Left cardiac atrium (tissue), 4 donors: ENCODE measurements at regions of chr2 and their contacts with region 1.

Region 1: DNA sequence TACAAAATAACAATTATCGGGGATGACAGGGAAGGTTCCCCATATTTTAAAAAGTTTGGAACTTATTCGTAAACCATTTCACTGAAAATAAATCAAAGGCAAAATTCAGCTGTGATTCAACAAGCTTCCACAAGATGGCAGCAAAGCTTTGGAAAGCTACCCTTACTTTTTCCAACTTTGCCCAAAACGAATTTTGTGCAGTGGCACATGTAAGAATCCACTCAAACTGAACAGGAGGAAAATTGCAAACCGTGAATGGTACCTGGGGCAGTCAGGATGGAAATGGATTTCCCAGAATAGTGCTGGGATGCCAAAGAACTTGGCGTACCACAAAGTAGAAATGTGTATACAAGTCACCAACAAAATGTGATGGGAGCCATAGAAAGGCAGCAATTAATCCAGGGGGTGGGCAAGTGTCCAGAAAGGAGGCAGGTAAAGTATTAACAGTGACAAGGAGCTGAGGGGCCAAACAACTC is 10.7 kb downstream of the RPL31 start:
- DNase-seq: no peak
- ATAC-seq: peak; percentile 9 to 38

Region 2: GRCh38 chr2:100941646-100942240 is 71.0 kb before region 1 on chr2:
- intact Hi-C with region 1: no loop called
- DNase-seq: no peak
- ATAC-seq: no peak

Region 3: GRCh38 chr2:101205521-101205998 is 192.8 kb after region 1 on chr2:
- intact Hi-C with region 1: loop called in 1 of 2 experiments (anchors 2 kb)
- DNase-seq: peak; percentile 62
- ATAC-seq: peak; percentile 91 to 93